OCI-LY7 (cell line): ENCODE measurements at regions of chr2 and their contacts with region 1.

Region 1: GRCh38 chr2:138493334-138493733 is 8.2 kb upstream of the SPOPL start:
- DNase-seq: no peak
- H3K4me3 ChIP-seq: no peak overlapping the region
- H3K27ac ChIP-seq: no peak overlapping the region
- H3K4me1 ChIP-seq: no peaks in the 10 kb centered on the region
- CTCF ChIP-seq: no peak

Region 2: DNA sequence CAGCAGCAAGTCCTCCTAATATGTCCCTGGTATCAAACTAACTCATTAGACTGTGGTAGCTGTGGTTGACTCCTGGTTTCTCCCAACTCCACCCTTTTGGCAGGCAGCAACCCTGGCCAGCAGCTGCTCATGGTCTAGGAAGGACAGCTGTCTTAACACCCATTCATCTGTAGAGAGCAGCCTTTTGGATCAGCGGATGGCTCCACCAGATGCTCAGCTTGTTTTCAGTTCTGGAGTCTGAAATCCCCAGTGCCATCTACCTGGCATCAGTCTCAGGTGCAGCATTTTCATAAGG is 108.8 kb after region 1 on chr2:
- CTCF ChIA-PET with region 1: no interaction called
- POLR2A ChIA-PET with region 1: no interaction called
- intact Hi-C with region 1: loop called (anchors 5 kb)
- DNase-seq: no peak
- H3K4me3 ChIP-seq: no peak overlapping the region
- H3K27ac ChIP-seq: no peak overlapping the region
- H3K4me1 ChIP-seq: no peaks in the 10 kb centered on the region
- CTCF ChIP-seq: no peak